Gastrocnemius medialis (tissue), 4 donors: ENCODE measurements at regions of chr12 and their contacts with region 1.

Region 1: DNA sequence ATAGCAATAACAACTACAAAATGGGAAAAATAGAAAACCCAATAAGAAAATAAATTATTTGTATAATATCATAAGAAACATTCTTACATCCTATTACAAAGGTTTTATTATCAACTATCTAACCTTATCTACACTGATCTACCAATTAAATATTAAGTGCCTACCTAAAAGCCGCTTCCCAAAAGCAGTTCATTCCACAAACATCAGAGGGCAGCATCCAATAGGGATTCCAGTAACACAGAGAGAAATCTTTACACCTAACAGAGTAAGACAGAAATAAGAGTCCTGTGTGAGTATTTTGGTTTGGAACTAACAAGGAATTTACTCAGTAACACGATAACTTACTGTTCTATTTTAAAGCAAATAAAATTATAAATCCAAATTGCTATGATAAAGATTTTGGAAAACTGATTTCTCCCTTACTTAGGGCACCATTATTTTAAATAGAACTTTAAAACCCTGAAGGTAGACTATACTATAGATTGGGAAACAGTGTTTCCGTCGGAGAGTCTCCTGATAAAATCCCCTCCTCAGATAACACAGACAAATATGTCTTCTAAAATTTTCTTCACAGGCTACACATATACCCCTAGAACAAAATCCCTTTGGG is 15.0 kb downstream of the GXYLT1 start:
- DNase-seq: peak in 1 of 2 donors; percentile 39
- ATAC-seq: peak; percentile 91
- H3K4me3 ChIP-seq: no peak overlapping the region
- H3K27ac ChIP-seq: no peak overlapping the region
- H3K4me1 ChIP-seq: peaks cover 18 to 23% of the 10 kb centered on the region in 2 donors
- H3K27me3 ChIP-seq: no peaks in the 10 kb centered on the region
- CTCF ChIP-seq: peak; percentile 62 to 93 (median 84)
- POLR2A ChIP-seq: no peak

Region 2: GRCh38 chr12:42237052-42237852 is 107.6 kb after region 1 on chr12:
- in situ Hi-C with region 1: loop called in 2 of 4 experiments (anchors 5 to 10 kb)
- intact Hi-C with region 1: no loop called
- DNase-seq: peak; percentile 57 to 82
- ATAC-seq: peak; percentile 66 to 79
- H3K4me3 ChIP-seq: peak overlapping the region; percentile 73 to 99 (median 81)
- H3K27ac ChIP-seq: peak overlapping the region; percentile 77 to 98 (median 89)
- H3K4me1 ChIP-seq: peaks cover 53 to 57% of the 10 kb centered on the region in 2 donors
- H3K27me3 ChIP-seq: no peaks in the 10 kb centered on the region
- CTCF ChIP-seq: peak; percentile 27 to 59 (median 32)
- POLR2A ChIP-seq: no peak

Region 3: GRCh38 chr12:42325653-42326474 is 196.2 kb after region 1 on chr12 and contains the starts of genes PPHLN1 and ZCRB1:
- in situ Hi-C with region 1: loop called (anchors 5 kb)
- intact Hi-C with region 1: no loop called
- DNase-seq: peak; percentile 66 to 79
- ATAC-seq: peak; percentile 93 to 96
- H3K4me3 ChIP-seq: peak within 1 kb of the TSS; percentile 75 to 94 (median 83)
- H3K27ac ChIP-seq: peak within 1 kb of the TSS; percentile 84 to 90 (median 88)
- H3K4me1 ChIP-seq: peaks cover 14 to 17% of the 10 kb centered on the region in 2 donors
- H3K27me3 ChIP-seq: no peaks in the 10 kb centered on the region
- CTCF ChIP-seq: peak in 1 of 5 experiments; percentile 7
- POLR2A ChIP-seq: peak; percentile 65 to 71
- total RNA-seq, gene PPHLN1: 32.7 to 52.3 (median 43.5) TPM
- total RNA-seq, gene ZCRB1: 24.4 to 42.4 (median 35.0) TPM

Region 4: DNA sequence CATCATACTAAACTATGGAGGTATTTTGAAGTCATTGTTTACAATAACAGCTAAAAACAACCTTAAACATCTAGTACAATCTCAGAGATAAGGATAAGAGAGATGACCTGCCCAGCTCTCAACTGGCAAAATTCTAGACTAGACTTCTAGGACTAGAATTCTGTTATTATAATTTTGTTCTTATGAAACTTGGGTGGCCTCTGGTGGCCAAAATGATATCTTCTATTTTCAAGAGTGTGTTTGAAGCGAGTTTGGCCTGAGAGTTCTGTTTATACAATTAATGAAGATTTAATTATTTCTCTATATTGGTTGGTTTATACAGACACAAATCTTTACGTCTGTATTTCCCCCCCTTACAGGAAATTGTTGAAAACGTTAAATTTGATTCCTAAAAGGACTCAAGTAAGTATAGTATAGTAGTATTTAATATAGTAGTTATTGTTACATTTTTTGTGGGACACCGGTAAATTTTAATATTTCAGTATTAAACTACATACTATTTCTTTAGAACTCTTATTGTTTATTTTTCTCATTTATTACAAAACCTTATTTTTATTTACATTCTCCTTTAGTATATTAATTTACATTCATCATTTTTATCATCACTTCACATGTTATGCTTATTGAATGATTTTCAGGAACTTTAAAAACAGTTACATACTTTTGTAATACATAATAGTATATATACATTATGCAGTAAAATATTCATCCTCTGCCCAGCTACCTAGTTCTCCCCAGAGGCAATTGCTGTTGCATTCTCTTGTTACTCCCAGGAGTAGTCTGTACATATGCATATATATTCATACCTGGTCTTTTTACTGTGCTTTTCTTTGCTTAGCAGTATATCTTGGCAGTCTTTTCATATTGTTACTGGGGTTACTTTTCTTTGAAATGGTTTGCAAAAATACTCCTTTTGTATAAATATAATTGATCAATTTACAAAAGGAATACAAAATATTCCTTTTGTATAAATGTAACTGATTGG is 202.9 kb after region 1 on chr12:
- in situ Hi-C with region 1: loop called (anchors 5 kb)
- intact Hi-C with region 1: loop called (anchors 1 kb)
- DNase-seq: no peak
- ATAC-seq: peak; percentile 58 to 65
- H3K4me3 ChIP-seq: no peak overlapping the region
- H3K27ac ChIP-seq: no peak overlapping the region
- H3K4me1 ChIP-seq: peaks cover 2 to 10% of the 10 kb centered on the region in 2 donors
- H3K27me3 ChIP-seq: no peaks in the 10 kb centered on the region
- CTCF ChIP-seq: peak; percentile 55 to 71 (median 70)
- POLR2A ChIP-seq: no peak

Region 5: DNA sequence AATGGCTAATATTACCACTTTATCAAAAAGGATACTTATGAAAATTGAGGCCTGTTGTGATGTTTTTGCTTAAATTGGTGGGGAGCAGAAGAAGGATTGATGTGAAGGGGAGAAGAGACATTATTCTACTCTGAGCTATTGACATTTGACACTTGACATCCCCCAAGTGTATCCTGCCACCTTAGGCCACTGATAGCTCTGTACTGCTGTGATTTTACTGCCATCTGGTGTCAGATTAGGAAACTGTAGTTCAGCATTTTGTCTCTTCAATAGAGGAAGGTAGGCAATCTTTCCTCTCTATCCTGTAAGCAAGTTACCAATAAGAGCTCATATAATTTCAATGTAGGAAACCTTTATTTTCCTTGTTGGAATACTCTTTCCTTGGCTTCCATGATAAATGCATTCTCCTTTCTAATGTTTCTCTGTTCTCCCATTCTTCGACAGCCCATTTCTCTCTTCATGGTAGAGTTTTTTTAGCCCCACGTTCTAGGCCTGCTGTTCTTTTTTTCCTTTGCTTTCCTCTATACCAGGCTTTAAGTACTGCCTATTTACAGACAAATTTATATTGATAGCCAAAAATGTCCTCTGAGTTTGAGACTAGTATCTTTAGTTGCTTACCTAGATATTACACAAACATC is 242.6 kb after region 1 on chr12:
- in situ Hi-C with region 1: no loop called
- intact Hi-C with region 1: loop called (anchors 1 kb)
- DNase-seq: no peak
- ATAC-seq: peak in 1 of 2 donors; percentile 53
- H3K4me3 ChIP-seq: no peak overlapping the region
- H3K27ac ChIP-seq: no peak overlapping the region
- H3K4me1 ChIP-seq: no peaks in the 10 kb centered on the region
- H3K27me3 ChIP-seq: no peaks in the 10 kb centered on the region
- CTCF ChIP-seq: peak in 4 of 5 experiments; percentile 44 to 71 (median 60)
- POLR2A ChIP-seq: no peak

Region 6: GRCh38 chr12:42568952-42569915 is 439.5 kb after region 1 on chr12:
- in situ Hi-C with region 1: no loop called
- intact Hi-C with region 1: loop called (anchors 2 kb)
- DNase-seq: no peak
- ATAC-seq: peak; percentile 50 to 66
- H3K4me3 ChIP-seq: no peak overlapping the region
- H3K27ac ChIP-seq: no peak overlapping the region
- H3K4me1 ChIP-seq: no peaks in the 10 kb centered on the region
- H3K27me3 ChIP-seq: no peaks in the 10 kb centered on the region
- CTCF ChIP-seq: peak in 4 of 5 experiments; percentile 32 to 69 (median 50)
- POLR2A ChIP-seq: no peak